ENCODE measurements at regions of chr11 and their contacts with region 1.

Region 1: DNA sequence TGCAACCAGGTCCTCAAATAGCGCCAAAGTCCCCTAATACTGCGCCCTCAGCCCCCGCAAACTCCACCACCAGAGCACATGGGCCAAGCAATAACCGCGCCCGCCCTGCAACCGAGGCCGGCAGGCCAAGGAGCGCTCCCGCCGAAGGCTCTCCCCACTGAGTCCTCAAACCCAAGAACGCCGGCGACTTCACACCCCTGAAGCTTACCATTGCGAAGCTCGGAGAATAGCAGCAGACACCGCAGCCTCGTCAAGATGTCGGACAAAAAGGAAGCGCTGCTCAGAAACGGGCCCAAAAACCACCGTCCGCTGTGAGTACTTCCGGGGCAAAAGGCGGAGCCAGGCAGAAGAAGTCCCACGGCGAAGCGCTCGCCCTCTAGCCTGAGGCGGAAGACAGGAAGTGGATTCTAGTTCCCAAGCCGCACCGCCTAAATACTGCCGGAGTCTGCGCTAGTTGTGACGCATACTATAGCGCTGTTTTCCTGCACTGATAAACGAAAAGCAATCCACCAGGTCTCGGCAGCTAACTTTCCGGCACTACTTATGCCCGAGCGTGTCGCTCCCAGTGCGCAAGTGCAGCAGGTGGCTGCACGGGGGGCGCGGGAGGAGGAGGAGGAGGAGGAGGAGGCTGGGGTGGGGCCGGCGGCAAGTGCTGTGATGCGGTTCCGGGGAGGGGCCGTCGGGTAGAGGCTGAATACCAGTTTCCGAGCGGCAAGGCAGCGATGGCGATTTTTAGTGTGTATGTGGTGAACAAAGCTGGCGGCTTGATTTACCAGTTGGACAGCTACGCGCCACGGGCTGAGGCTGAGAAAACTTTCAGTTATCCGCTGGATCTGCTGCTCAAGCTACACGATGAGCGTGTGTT is at the starts of genes RPS25 and TRAPPC4:
- DNase-seq: peak; percentile 84
- H3K4me3 ChIP-seq: peak within 1 kb of the TSS; percentile 99
- H3K27ac ChIP-seq: peak within 1 kb of the TSS; percentile 87
- H3K27me3 ChIP-seq: no peaks in the 10 kb centered on the region
- CTCF ChIP-seq: no peak
- polyA plus RNA-seq, gene RPS25: 819 and 1,059 TPM in 2 replicates
- polyA plus RNA-seq, gene TRAPPC4: 95.3 and 100 TPM in 2 replicates

Region 2: GRCh38 chr11:118366287-118366686 is 652.0 kb before region 1 on chr11:
- CTCF ChIA-PET with region 1: no interaction called
- POLR2A ChIA-PET with region 1: no interaction called
- DNase-seq: no peak
- H3K4me3 ChIP-seq: no peak overlapping the region
- H3K27ac ChIP-seq: no peak overlapping the region
- H3K27me3 ChIP-seq: no peaks in the 10 kb centered on the region
- CTCF ChIP-seq: no peak

Region 3: GRCh38 chr11:118705111-118705741 is 313.1 kb before region 1 on chr11:
- CTCF ChIA-PET with region 1: no interaction called
- POLR2A ChIA-PET with region 1: interaction called, 11 read pairs
- DNase-seq: no peak
- H3K4me3 ChIP-seq: no peak overlapping the region
- H3K27ac ChIP-seq: no peak overlapping the region
- H3K27me3 ChIP-seq: peaks cover 15% of the 10 kb centered on the region
- CTCF ChIP-seq: no peak

Region 4: GRCh38 chr11:118807800-118808778 is 210.2 kb before region 1 on chr11:
- CTCF ChIA-PET with region 1: no interaction called
- POLR2A ChIA-PET with region 1: no interaction called
- DNase-seq: no peak
- H3K4me3 ChIP-seq: no peak overlapping the region
- H3K27ac ChIP-seq: no peak overlapping the region
- H3K27me3 ChIP-seq: peaks cover 25% of the 10 kb centered on the region
- CTCF ChIP-seq: no peak

Region 5: DNA sequence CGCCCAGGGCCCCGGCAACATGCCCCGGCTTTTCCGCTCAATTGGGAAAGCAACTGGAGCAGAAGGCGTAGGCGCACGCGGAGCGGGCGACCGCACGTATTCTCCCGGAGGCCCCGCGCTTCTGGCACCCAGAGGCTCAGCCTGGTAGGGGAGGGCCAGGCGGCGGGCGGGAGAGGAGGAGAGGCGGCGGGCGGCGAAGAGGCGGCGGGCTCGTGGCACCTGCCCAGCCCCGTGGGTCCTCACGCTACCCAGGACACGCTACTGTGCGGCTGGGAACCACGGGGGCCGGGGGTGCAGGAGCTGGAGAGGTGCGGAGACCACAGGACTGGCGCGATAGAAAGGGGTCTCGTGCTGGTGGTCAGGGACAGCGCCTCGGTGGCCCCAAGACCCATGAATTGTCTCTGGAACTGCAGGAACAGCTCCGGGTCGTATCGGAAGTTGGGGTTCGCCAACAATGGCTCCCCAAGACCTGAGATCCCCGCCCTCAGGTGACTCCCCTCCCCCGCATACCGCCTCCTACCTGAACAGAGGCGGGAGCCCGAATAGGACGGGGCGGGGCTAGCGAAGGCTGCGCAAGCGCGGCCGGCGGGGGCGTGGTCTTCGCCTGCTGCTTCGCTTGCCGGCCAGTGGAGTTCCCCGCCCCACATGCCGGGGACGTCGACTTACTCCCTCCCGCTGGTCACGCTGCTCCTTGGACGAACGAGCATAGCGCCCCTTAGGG is 12.2 kb after region 1 on chr11 and contains the start of gene SLC37A4:
- CTCF ChIA-PET with region 1: interaction called, 17 read pairs
- POLR2A ChIA-PET with region 1: interaction called, 3 read pairs
- DNase-seq: peak; percentile 91
- H3K4me3 ChIP-seq: peak within 1 kb of the TSS; percentile 89
- H3K27ac ChIP-seq: no peak within 1 kb of the TSS
- H3K27me3 ChIP-seq: no peaks in the 10 kb centered on the region
- CTCF ChIP-seq: no peak; the same call in 1 of the 2 replicates
- polyA plus RNA-seq, gene SLC37A4: 12.5 and 14.9 TPM in 2 replicates

Measured in AG04450 (cell line).